H1 (cell line): ENCODE measurements at regions of chr1 and their contacts with region 1.

Region 1: GRCh38 chr1:214551436-214552173 is at the start of gene PTPN14:
- DNase-seq: peak; percentile 87 to 88
- H3K4me3 ChIP-seq: peak within 1 kb of the TSS; percentile 80 to 99 (median 92)
- H3K27ac ChIP-seq: peak within 1 kb of the TSS; percentile 99
- H3K4me1 ChIP-seq: peaks cover 5 to 18% (median 10%) of the 10 kb centered on the region in 4 experiments; a peak in 6 of 7 replicates
- H3K27me3 ChIP-seq: no peaks in the 10 kb centered on the region
- CTCF ChIP-seq: peak; percentile 29 to 38 (median 30); a peak in 3 of 4 replicates
- EP300 ChIP-seq: peak in 1 of 2 experiments; percentile 85; a peak in 1 of 3 replicates
- POLR2A ChIP-seq: peak; percentile 2 to 94; a peak in 2 of 3 replicates
- RAD21 ChIP-seq: peak in 1 of 2 experiments; percentile 30; a peak in 1 of 4 replicates
- total RNA-seq, gene PTPN14: 77.4 and 93.6 TPM in 2 replicates

Region 2: DNA sequence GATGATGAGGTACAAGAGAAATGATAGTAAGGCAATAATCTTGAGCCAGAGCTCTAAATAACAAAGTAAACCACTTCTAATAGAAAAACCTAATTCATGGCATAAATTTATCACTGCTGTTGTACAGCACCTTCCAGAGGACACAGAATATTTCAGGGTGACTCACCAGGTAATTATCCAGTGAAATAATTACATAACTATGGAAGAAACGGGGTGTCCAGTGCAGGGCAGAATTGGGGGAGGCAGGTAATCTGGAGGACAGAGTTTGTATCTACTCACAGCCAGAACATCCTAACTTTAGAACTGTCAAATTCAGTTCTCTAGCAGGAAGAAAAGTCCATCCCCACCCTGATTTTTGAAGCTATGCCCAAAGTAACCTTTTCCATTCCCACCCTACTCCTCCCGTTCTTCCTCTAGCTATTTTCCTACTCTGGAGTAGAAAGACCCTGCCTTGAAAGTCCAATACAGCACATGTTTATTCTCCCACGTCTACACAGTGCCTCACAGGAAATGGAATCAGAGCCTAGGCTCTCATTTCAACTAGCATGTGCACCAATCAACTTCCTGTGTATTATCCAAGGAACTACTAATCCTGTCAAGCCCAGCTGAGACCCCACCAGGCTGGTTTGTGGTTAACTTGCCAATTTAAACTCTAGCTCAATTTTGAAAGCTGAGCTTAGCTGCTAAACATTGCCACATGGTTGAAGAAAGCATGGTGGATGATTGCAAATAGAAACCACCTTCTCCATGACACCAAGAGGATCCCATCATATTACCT is 96.8 kb before region 1 on chr1:
- CTCF ChIA-PET with region 1: interaction called, 5 read pairs
- POLR2A ChIA-PET with region 1: interaction called, 30 read pairs
- DNase-seq: no peak
- H3K4me3 ChIP-seq: no peak overlapping the region
- H3K27ac ChIP-seq: no peak overlapping the region
- H3K4me1 ChIP-seq: peaks cover 1 to 19% (median 9%) of the 10 kb centered on the region in 4 experiments; a peak in 5 of 7 replicates
- H3K27me3 ChIP-seq: no peaks in the 10 kb centered on the region
- CTCF ChIP-seq: no peak
- EP300 ChIP-seq: no peak
- POLR2A ChIP-seq: no peak
- RAD21 ChIP-seq: no peak

Region 3: GRCh38 chr1:214496126-214496525 is 55.5 kb before region 1 on chr1:
- CTCF ChIA-PET with region 1: interaction called, 3 read pairs
- POLR2A ChIA-PET with region 1: interaction called, 13 read pairs
- DNase-seq: no peak
- H3K4me3 ChIP-seq: no peak overlapping the region
- H3K27ac ChIP-seq: no peak overlapping the region
- H3K4me1 ChIP-seq: peaks cover 0 to 6% (median 5%) of the 10 kb centered on the region in 4 experiments; a peak in 3 of 7 replicates
- H3K27me3 ChIP-seq: no peaks in the 10 kb centered on the region
- CTCF ChIP-seq: no peak
- EP300 ChIP-seq: no peak
- POLR2A ChIP-seq: no peak
- RAD21 ChIP-seq: no peak

Region 4: GRCh38 chr1:214537219-214537618 is 14.4 kb before region 1 on chr1:
- CTCF ChIA-PET with region 1: interaction called, 26 read pairs
- POLR2A ChIA-PET with region 1: interaction called, 99 read pairs
- DNase-seq: no peak
- H3K4me3 ChIP-seq: no peak overlapping the region
- H3K27ac ChIP-seq: no peak overlapping the region
- H3K4me1 ChIP-seq: peaks cover 0 to 4% (median under 1%) of the 10 kb centered on the region in 4 experiments; a peak in 3 of 7 replicates
- H3K27me3 ChIP-seq: no peaks in the 10 kb centered on the region
- CTCF ChIP-seq: no peak
- EP300 ChIP-seq: no peak
- POLR2A ChIP-seq: no peak
- RAD21 ChIP-seq: no peak

Region 5: GRCh38 chr1:214573386-214574358 is 22.1 kb after region 1 on chr1:
- CTCF ChIA-PET with region 1: interaction called, 7 read pairs
- POLR2A ChIA-PET with region 1: interaction called, 70 read pairs
- DNase-seq: no peak
- H3K4me3 ChIP-seq: no peak overlapping the region
- H3K27ac ChIP-seq: no peak overlapping the region
- H3K4me1 ChIP-seq: no peaks in the 10 kb centered on the region
- H3K27me3 ChIP-seq: peaks cover 0 to 1% (median 0%) of the 10 kb centered on the region in 4 experiments; a peak in 1 of 7 replicates
- CTCF ChIP-seq: no peak
- EP300 ChIP-seq: no peak
- POLR2A ChIP-seq: no peak
- RAD21 ChIP-seq: no peak

Region 6: DNA sequence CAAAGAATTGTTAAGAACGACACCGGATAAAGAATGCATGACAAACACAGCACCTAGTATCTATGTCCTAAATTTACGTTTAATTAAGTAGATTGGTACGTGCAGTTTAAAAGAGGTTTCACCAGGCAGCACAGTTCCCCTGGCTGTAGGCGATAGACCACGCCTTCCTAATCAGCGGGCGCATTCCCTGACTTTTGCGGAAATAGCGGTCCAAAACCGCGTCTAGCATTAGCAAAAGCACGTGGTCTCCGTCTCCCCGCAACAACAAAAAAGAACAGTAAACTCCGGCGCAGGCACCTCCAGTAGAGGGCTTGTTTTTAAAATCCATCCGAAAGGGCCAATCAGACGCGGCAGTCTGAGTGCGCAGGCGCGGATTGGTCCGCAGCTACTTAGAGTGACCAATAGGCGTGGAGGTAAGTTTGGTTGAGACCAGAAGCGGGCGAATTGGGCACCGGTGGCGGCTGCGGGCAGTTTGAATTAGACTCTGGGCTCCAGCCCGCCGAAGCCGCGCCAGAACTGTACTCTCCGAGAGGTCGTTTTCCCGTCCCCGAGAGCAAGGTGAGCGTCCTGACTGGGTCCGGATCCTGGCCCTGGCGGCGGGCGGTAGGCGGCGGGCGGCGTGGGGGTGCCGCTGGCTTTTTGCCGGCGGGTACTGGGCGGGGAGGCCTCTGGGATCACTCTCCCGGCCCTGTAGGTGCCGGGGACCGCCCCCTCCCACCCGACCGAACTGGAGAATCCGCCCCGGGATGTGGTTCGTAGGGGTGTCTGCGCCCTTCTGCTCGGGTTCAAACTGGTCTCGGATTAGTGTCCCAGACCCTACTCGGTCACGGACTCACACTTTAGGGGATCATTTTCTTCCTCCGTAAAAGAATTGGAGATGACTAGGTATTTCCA is 51.4 kb after region 1 on chr1 and contains the start of gene CENPF:
- CTCF ChIA-PET with region 1: no interaction called
- POLR2A ChIA-PET with region 1: interaction called, 12 read pairs
- DNase-seq: peak; percentile 92 to 98
- H3K4me3 ChIP-seq: peak within 1 kb of the TSS; percentile 84 to 95 (median 87)
- H3K27ac ChIP-seq: peak within 1 kb of the TSS; percentile 81
- H3K4me1 ChIP-seq: peaks cover 0 to 2% (median under 1%) of the 10 kb centered on the region in 4 experiments; a peak in 2 of 7 replicates
- H3K27me3 ChIP-seq: no peaks in the 10 kb centered on the region
- CTCF ChIP-seq: peak in 1 of 3 experiments; percentile 2; a peak in 1 of 4 replicates
- EP300 ChIP-seq: no peak
- POLR2A ChIP-seq: peak; percentile 73 to 90
- RAD21 ChIP-seq: no peak
- total RNA-seq, gene CENPF: 170 and 175 TPM in 2 replicates

Region 7: GRCh38 chr1:214623430-214623829 is 71.8 kb after region 1 on chr1:
- CTCF ChIA-PET with region 1: no interaction called
- POLR2A ChIA-PET with region 1: no interaction called
- DNase-seq: no peak
- H3K4me3 ChIP-seq: no peak overlapping the region
- H3K27ac ChIP-seq: no peak overlapping the region
- H3K4me1 ChIP-seq: no peaks in the 10 kb centered on the region
- H3K27me3 ChIP-seq: no peaks in the 10 kb centered on the region
- CTCF ChIP-seq: no peak
- EP300 ChIP-seq: no peak
- POLR2A ChIP-seq: no peak
- RAD21 ChIP-seq: no peak